Head of caudate nucleus (tissue), 42 donors: ENCODE measurements at regions of chr7 and their contacts with region 1.

Region 1: DNA sequence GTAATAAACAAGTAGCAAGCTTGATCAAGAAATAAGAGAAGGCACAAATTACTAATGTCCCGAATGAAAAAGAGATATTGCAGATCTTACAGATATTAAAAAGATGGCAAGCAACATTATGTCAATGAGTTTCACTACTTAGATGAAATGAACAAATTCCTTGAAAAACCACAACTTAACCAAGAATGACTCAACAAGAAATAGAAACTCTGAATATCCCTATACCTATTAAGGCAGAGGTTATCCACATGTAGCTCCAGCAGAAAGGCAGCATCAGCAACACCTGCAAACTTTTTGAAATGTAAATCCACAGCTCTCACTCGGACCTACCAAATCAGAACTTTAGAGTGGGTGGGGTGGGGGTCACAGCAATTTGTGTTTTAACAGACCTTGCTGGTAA is 33.6 kb downstream of the PDE1C start:
- DNase-seq: no peak

Region 2: DNA sequence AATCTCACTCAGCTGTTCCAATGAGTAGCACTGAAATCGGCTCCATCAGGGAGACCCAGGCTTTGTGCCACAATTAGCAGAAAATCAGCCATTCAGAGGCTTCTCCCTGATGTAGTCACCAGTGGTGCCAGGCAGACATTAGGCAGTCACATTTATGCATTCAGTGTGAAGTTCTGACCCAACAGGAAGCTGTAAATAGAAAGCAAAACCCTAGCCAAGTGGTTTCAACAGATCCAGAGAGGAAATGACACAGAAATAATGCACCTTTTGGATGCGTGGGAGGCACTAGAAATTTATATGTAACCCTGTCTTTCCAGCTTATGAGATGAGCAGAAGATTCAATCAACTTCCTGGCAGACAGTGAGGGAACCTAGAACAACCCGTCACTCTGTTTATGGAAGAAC is 152.8 kb before region 1 on chr7:
- intact Hi-C with region 1: loop called (anchors 10 kb)
- DNase-seq: peak in 41 of 42 donors; percentile 7 to 89 (median 64)